Motor neuron (in vitro differentiated cells): ENCODE measurements at regions of chr7 and their contacts with region 1.

Region 1: DNA sequence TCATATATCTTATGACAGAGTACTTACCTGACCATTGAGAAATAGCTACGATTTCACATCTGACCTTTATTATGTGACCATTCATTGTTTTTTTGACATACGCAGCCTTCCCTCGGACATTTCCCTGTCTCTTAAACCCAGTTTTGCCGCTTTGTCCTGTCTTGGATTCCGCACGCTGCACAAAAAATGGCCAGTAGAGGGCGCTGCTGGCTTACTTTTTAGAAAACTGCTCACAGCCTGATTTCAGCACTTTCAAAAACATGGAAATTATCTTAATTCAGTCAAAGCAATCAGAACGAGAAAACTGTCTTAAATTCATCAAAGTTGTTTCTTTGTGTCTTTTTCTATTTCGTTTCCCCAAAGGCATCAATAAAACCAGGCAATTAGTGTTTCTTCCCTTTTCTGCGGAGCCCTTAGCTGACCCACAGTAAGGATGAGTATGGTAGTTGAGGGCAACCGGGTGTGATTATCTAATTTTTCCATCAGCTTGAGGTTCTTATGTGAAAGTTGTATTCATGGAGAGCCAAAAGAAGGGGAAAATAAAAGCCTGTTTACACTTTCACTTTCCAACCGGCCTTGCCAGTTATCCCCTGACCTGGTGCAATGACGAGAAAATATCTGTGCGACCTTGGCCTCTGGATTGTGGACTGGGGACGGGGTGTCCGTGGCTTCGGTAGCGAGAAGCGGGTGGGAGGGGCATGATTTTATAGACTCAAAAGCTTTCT is 144.4 kb downstream of the DYNC1I1 start:
- ATAC-seq: peak; percentile 42 to 83 (median 73)
- H3K4me3 ChIP-seq: no peak overlapping the region
- H3K27ac ChIP-seq: no peak overlapping the region
- H3K4me1 ChIP-seq: no peaks in the 10 kb centered on the region

Region 2: GRCh38 chr7:94897541-94897940 is 1019.2 kb before region 1 on chr7:
- in situ Hi-C with region 1: no loop called
- ATAC-seq: peak in 4 of 8 experiments; percentile 34 to 96 (median 64)
- H3K4me3 ChIP-seq: no peak overlapping the region
- H3K27ac ChIP-seq: no peak overlapping the region
- H3K4me1 ChIP-seq: peaks cover 0 to 2% of the 10 kb centered on the region in 2 donors

Region 3: DNA sequence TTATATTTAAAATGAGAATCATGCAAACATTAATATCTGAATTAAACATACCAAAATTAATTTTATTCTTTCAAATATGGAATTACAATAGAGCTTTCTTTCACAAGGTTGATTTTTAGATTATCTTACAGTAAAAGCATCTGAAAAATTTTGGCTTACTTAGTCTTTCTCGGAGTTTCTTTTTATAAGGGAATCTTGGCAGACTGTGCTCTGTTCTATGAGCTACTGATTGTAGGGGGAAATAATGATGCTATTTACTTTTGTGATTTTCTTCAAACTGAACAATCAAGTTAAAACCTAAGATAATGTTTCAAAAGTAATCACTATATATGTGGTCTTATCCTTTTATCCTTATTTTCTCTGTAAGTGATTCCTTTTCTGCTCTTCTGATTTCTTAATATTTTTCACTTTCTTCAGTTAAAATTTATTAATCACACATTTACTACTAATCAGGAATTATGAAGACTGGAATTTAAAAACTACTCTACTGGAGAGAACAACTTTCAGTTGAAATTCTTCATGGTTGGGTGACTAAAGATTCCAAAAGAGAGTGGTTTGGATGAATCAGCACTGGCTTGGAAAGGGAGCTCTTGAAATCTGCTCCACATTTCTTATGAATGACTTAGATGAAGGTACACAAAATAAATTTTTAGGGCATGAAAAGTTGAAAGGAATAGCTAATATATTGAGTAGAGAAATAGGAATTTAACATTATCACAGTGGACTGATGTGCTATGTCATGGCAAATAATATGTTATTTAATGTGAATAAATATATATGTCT is 905.4 kb before region 1 on chr7:
- in situ Hi-C with region 1: no loop called
- ATAC-seq: no peak
- H3K4me3 ChIP-seq: no peak overlapping the region
- H3K27ac ChIP-seq: no peak overlapping the region
- H3K4me1 ChIP-seq: no peaks in the 10 kb centered on the region

Region 4: GRCh38 chr7:95675016-95675415 is 241.7 kb before region 1 on chr7:
- in situ Hi-C with region 1: no loop called
- ATAC-seq: no peak
- H3K4me3 ChIP-seq: no peak overlapping the region
- H3K27ac ChIP-seq: no peak overlapping the region
- H3K4me1 ChIP-seq: no peaks in the 10 kb centered on the region

Region 5: DNA sequence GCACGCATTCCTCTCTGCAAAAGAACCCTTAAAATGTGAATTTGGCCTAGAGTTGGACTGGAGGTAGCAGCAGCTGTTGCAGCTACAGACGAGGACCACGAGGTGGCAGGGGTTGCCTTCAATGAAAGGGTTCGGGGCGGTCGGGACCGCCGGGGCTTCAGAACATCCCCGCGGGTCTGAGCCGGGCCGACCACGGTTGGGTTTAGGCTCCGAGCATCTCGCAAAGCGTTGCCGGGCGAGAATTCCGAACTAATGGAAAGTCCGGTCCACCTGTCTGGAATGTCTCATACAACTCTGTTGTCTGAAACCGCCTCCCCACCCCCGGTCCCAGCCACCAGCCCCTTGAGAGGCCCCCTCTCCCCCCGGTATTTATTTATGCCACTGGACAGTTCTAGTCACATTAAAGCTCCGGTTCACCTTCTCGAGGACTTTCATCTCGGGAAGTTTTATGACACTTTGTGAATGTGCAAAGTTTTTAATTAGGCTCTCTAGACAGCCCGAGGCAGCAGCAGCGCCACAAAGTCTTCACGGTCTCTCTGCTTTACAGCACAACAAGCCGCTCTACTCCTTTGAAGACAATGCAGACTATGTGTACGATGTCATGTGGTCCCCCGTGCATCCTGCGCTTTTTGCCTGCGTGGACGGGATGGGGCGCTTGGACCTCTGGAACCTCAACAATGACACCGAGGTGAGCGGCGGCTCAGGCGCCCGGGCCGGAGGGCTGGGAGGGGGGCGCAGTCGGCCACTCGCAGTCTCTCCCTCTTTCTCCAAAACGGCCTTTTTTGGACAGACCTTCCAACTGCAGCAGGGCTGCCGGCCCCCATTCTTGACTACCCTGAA is 159.0 kb after region 1 on chr7:
- in situ Hi-C with region 1: loop called in 1 of 9 experiments (anchors 10 kb)
- ATAC-seq: peak; percentile 90 to 97 (median 94)
- H3K4me3 ChIP-seq: peak overlapping the region; percentile 34 to 52 (median 42)
- H3K27ac ChIP-seq: no peak overlapping the region
- H3K4me1 ChIP-seq: no peaks in the 10 kb centered on the region

Region 6: GRCh38 chr7:96224685-96225084 is 307.9 kb after region 1 on chr7:
- in situ Hi-C with region 1: loop called in 1 of 9 experiments (anchors 25 kb)
- ATAC-seq: peak in 1 of 8 experiments; percentile 41
- H3K4me3 ChIP-seq: no peak overlapping the region
- H3K27ac ChIP-seq: no peak overlapping the region
- H3K4me1 ChIP-seq: no peaks in the 10 kb centered on the region

Region 7: DNA sequence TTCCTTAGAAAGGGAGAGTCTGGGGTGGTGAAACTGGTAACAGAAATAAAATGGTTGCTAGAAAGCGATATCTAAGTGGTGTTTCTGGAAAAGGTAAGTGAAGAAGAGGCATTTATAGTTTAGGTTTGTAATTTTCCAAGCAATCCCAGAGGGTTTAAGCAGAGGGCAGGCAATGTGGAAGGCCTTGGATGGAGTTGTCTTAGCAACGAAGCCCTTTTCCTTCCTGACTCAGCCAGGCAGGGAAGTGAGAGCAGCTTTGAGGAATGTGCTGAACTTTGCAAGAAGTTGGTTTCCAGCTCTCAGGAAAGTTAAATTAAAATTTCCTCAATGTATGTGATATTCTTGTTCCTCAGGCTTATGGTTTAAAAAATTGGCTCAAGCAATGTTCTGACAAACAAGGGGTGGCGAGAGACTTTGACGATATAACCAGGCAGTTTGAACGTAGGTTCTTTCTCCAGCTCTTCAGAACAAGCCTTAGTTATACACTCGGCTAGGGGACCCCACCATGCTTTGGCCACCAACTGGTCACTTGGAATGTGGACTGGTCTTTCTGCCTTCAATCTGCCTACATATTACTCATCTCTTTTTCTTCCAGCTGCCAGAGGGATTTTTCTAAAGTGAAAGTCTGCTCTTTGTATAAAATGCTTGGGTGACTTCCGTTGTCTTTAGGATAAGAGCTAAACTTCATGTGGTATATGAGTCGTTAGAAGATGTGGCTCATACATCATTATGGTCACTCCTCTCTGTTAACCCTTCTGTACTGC is 472.1 kb after region 1 on chr7:
- in situ Hi-C with region 1: loop called in 1 of 9 experiments (anchors 25 kb)
- ATAC-seq: peak in 3 of 8 experiments; percentile 47 to 96 (median 69)
- H3K4me3 ChIP-seq: no peak overlapping the region
- H3K27ac ChIP-seq: no peak overlapping the region
- H3K4me1 ChIP-seq: no peaks in the 10 kb centered on the region

Region 8: DNA sequence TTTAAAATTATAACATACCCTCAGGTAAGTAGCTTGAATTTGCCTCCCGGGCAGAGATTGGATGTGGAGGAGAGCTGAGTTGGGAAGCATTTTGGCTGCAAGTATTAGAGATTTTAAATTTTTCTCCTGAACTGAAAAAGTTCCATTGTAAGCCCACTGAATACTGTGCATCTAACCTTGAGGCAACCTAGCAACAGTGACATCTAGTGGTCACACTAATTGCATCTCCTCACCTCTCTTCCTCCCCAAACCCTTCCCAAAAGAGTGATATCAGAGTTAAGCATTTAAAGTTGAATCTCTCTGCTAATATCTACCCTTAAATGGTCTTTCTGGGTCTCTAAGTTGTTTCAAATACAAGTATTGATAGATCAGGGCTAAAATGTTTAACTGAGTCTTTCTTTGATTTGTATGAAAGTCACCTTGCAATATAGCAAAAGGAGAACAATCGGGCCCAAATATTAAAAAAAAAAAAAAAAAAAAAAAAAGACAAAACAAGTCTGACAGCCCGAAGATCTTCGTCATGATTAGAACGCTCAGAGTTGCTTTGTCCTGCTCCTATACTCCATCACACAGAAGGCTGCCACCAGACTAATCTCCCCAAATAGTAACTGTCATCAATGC is 1148.3 kb after region 1 on chr7:
- in situ Hi-C with region 1: loop called in 1 of 9 experiments (anchors 25 kb)
- ATAC-seq: peak in 6 of 8 experiments; percentile 49 to 97 (median 80)
- H3K4me3 ChIP-seq: no peak overlapping the region
- H3K27ac ChIP-seq: no peak overlapping the region
- H3K4me1 ChIP-seq: no peaks in the 10 kb centered on the region